ENCODE measurements at regions of chr18 and their contacts with region 1.

Region 1: DNA sequence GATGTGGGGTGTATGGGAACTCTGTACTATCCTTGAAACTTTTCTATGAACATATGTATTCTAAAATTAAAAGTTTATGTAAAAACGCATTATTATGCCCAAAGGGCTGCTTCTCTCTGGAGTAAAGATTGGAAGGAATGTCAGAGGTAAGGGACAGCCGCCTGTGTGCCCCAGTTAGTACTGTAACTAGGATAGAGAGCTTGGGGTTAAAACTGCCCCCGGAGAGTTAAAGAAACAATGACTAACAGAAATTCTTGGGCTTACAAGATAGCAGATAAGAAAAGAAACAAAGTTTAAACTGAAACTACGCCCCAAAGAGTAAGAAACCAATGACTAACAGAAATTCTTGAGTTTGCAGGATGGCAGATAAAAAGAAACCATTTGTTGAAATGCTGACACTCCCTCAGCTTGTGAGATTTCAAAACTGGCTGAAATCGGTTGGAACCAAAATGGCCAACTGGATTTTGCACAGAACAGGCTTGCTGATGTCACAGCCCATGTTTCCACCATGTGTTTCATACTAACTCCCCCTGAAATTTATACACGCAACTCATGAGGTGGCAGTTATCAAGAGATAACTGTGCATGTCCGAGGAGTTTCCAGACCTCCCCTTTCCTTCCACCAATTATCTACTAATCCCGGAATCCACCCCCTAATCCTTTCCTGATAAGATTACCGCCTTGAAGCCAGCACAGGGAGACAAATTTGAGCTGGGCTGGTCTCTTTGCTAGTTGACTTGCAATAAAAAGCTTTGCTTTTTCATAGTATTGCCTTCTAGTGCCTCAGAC is 8.7 kb upstream of the TXNDC2 start:
- DNase-seq: peak; percentile 82 to 84
- H3K4me3 ChIP-seq: peak overlapping the region; percentile 15
- H3K4me3 Mint-ChIP-seq: peak overlapping the region; percentile 58
- H3K27ac Mint-ChIP-seq: peak overlapping the region; percentile 78
- H3K4me1 ChIP-seq: peaks cover 34% of the 10 kb centered on the region
- H3K4me1 Mint-ChIP-seq: peaks cover 16% of the 10 kb centered on the region
- H3K27me3 ChIP-seq: no peaks in the 10 kb centered on the region
- H3K27me3 Mint-ChIP-seq: no peaks in the 10 kb centered on the region
- CTCF ChIP-seq: no peak

Region 2: GRCh38 chr18:9737472-9738121 is 139.5 kb before region 1 on chr18:
- CTCF ChIA-PET with region 1: no interaction called
- POLR2A ChIA-PET with region 1: no interaction called
- intact Hi-C with region 1: loop called (anchors 5 kb)
- DNase-seq: no peak
- H3K4me3 ChIP-seq: no peak overlapping the region
- H3K4me3 Mint-ChIP-seq: no peak overlapping the region
- H3K27ac Mint-ChIP-seq: peak overlapping the region; percentile 71
- H3K4me1 ChIP-seq: peaks cover 42% of the 10 kb centered on the region
- H3K4me1 Mint-ChIP-seq: peaks cover 27% of the 10 kb centered on the region
- H3K27me3 ChIP-seq: no peaks in the 10 kb centered on the region
- H3K27me3 Mint-ChIP-seq: no peaks in the 10 kb centered on the region
- CTCF ChIP-seq: no peak

Region 3: GRCh38 chr18:9808295-9809241 is 68.5 kb before region 1 on chr18:
- CTCF ChIA-PET with region 1: no interaction called
- POLR2A ChIA-PET with region 1: no interaction called
- intact Hi-C with region 1: loop called (anchors 2 kb)
- DNase-seq: peak; percentile 54 to 56
- H3K4me3 ChIP-seq: no peak overlapping the region
- H3K4me3 Mint-ChIP-seq: peak overlapping the region; percentile 36
- H3K27ac Mint-ChIP-seq: peak overlapping the region; percentile 75
- H3K4me1 ChIP-seq: peaks cover 38% of the 10 kb centered on the region
- H3K4me1 Mint-ChIP-seq: peaks cover 16% of the 10 kb centered on the region
- H3K27me3 ChIP-seq: no peaks in the 10 kb centered on the region
- H3K27me3 Mint-ChIP-seq: no peaks in the 10 kb centered on the region
- CTCF ChIP-seq: no peak

Region 4: GRCh38 chr18:9827641-9828505 is 49.2 kb before region 1 on chr18:
- CTCF ChIA-PET with region 1: no interaction called
- POLR2A ChIA-PET with region 1: no interaction called
- intact Hi-C with region 1: loop called (anchors 1 kb)
- DNase-seq: no peak
- H3K4me3 ChIP-seq: no peak overlapping the region
- H3K4me3 Mint-ChIP-seq: no peak overlapping the region
- H3K27ac Mint-ChIP-seq: peak overlapping the region; percentile 6
- H3K4me1 ChIP-seq: peaks cover 28% of the 10 kb centered on the region
- H3K4me1 Mint-ChIP-seq: peaks cover 18% of the 10 kb centered on the region
- H3K27me3 ChIP-seq: no peaks in the 10 kb centered on the region
- H3K27me3 Mint-ChIP-seq: no peaks in the 10 kb centered on the region
- CTCF ChIP-seq: no peak

Region 5: DNA sequence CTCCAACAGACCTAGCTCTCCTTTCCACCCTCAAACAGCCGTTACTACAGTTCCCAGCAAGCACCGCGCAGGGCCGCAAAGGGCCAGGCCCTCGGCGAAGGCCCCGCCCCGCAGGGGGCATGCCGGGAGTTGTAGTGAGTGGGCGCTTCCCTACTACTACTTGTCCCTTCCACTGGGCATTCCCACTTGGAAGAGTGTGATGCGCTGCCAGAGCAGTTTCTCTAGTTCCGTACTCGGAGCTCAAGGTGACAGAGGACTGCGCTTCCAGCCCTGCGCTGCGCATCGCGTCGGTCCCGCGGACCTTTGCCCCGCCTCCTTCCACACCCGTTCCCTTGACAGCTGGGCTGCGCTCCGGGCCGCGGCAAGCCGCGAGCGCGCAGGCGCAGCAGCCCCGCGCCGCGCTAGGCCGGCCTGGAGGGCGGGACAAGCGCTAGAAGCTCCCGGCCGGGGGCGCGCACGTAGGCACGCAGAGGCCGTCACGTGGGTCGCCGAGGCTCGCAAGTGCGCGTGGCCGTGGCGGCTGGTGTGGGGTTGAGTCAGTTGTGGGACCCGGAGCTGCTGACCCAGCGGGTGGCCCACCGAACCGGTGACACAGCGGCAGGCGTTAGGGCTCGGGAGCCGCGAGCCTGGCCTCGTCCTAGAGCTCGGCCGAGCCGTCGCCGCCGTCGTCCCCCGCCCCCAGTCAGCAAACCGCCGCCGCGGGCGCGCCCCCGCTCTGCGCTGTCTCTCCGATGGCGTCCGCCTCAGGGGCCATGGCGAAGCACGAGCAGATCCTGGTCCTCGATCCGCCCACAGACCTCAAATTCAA is 36.7 kb after region 1 on chr18 and contains the start of gene VAPA:
- CTCF ChIA-PET with region 1: no interaction called
- POLR2A ChIA-PET with region 1: interaction called, 13 read pairs
- intact Hi-C with region 1: loop called (anchors 1 kb)
- DNase-seq: peak; percentile 93 to 95
- H3K4me3 ChIP-seq: peak within 1 kb of the TSS; percentile 97
- H3K4me3 Mint-ChIP-seq: peak within 1 kb of the TSS; percentile 87
- H3K27ac Mint-ChIP-seq: peak within 1 kb of the TSS; percentile 75
- H3K4me1 ChIP-seq: peaks cover 14% of the 10 kb centered on the region
- H3K4me1 Mint-ChIP-seq: peaks cover 14% of the 10 kb centered on the region
- H3K27me3 ChIP-seq: no peaks in the 10 kb centered on the region
- H3K27me3 Mint-ChIP-seq: no peaks in the 10 kb centered on the region
- CTCF ChIP-seq: no peak
- total RNA-seq, gene VAPA: 205 and 222 TPM in 2 replicates